AG04450 (cell line): ENCODE measurements at regions of chr1 and their contacts with region 1.

Region 1: GRCh38 chr1:67430352-67431155 is at the start of gene SERBP1:
- DNase-seq: peak; percentile 91
- H3K4me3 ChIP-seq: peak within 1 kb of the TSS; percentile 85
- H3K27ac ChIP-seq: peak within 1 kb of the TSS; percentile 48
- H3K27me3 ChIP-seq: no peaks in the 10 kb centered on the region
- CTCF ChIP-seq: no peak
- polyA plus RNA-seq, gene SERBP1: 180 and 273 TPM in 2 replicates

Region 2: DNA sequence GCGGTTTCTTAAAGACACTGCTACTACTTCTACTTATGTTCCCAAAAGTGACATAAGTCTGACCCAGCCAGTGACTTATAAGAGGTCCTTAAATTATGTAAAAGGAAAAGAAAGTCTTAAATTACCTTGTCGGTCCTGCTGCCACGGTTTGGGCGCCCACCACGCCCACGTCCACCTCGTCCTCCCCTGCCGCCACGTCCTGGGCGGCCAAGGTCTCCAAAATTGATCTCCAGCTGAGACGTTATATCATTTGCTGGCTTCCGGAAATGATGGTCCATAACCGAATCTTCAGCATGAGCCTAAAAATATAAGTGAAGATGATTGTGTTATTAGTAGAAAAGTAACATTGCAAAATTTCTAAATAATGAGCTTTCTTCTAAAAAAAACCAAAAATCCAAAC is 15.5 kb before region 1 on chr1:
- CTCF ChIA-PET with region 1: no interaction called
- POLR2A ChIA-PET with region 1: interaction called, 10 read pairs
- DNase-seq: no peak
- H3K4me3 ChIP-seq: no peak overlapping the region
- H3K27ac ChIP-seq: no peak overlapping the region
- H3K27me3 ChIP-seq: no peaks in the 10 kb centered on the region
- CTCF ChIP-seq: no peak